CD4-positive, alpha-beta T cell (primary cell): ENCODE measurements at regions of chr6 and their contacts with region 1.

Region 1: GRCh38 chr6:31729515-31729978 is 448 bp upstream of the DDAH2 start:
- DNase-seq: peak; percentile 69 to 90 (median 77)
- ATAC-seq: peak; percentile 76
- H3K4me3 ChIP-seq: peak overlapping the region; percentile 77
- H3K4me3 Mint-ChIP-seq: peak overlapping the region; percentile 98
- H3K27ac ChIP-seq: peak overlapping the region; percentile 45 to 68
- H3K27ac Mint-ChIP-seq: peak overlapping the region; percentile 61
- H3K4me1 ChIP-seq: peaks cover 66% of the 10 kb centered on the region
- H3K4me1 Mint-ChIP-seq: peaks cover 67% of the 10 kb centered on the region
- H3K27me3 ChIP-seq: no peaks in the 10 kb centered on the region
- H3K27me3 Mint-ChIP-seq: no peaks in the 10 kb centered on the region
- CTCF ChIP-seq: peak; percentile 89

Region 2: DNA sequence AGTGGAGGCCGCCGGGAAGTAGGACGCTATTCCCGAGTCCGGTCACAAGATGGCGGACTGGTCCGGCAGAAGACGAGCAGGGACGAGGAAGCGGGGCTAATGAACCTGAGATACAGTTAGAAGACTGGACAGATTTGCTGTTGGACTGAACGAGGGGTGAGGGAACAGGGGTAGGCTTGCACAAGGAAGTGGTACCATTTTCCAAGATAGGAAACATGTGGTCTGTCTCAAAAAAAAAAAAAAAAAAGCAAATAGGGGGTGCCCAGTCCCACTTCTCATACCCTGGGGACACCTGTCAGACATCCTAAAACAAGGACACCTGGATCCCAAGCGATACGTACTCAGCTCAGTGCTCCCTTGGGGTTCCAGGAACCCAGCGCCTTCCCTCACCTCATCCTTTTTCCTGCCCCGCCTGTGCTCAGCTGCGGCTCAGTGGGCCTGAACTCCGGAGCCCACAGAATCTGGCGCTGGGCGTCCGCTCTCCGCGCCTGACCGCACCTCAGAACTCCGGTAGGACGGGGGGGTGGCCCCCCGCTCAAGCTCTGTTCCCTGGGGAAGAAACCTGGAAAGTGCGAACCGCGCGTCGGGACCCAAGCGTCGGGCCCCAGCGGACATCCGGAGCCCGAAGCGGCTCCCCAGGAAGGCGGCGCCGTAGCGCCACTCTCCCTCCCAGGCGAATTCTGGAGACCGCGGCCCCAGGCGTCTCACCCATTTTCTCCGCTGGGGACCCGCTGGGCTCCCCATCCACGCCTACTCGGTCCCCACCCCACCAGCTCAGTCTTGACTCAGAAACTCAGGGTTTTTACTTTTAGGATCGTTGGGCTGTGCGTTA is 48.5 kb before region 1 on chr6 and contains the start of gene LY6G5C:
- CTCF ChIA-PET with region 1: no interaction called
- POLR2A ChIA-PET with region 1: no interaction called
- intact Hi-C with region 1: loop called in 1 of 2 experiments (anchors 2 kb)
- DNase-seq: peak in 13 of 14 experiments; percentile 45 to 83 (median 61)
- ATAC-seq: peak; percentile 71
- H3K4me3 ChIP-seq: peak within 1 kb of the TSS; percentile 79
- H3K4me3 Mint-ChIP-seq: peak within 1 kb of the TSS; percentile 87
- H3K27ac ChIP-seq: peak within 1 kb of the TSS in 1 of 2 donors; percentile 44
- H3K27ac Mint-ChIP-seq: peak within 1 kb of the TSS; percentile 35
- H3K4me1 ChIP-seq: peaks cover 21% of the 10 kb centered on the region
- H3K4me1 Mint-ChIP-seq: peaks cover 19% of the 10 kb centered on the region
- H3K27me3 ChIP-seq: no peaks in the 10 kb centered on the region
- H3K27me3 Mint-ChIP-seq: no peaks in the 10 kb centered on the region
- CTCF ChIP-seq: peak; percentile 71
- total RNA-seq, gene LY6G5C: 0.49 to 0.67 TPM

Region 3: GRCh38 chr6:31739639-31740396 is 10.3 kb after region 1 on chr6 and contains the start of gene MSH5:
- CTCF ChIA-PET with region 1: interaction called, 41 read pairs
- POLR2A ChIA-PET with region 1: interaction called, 21 read pairs
- intact Hi-C with region 1: loop called in 1 of 2 experiments (anchors 1 kb)
- DNase-seq: peak; percentile 85 to 98 (median 93)
- ATAC-seq: peak; percentile 85
- H3K4me3 ChIP-seq: peak within 1 kb of the TSS; percentile 87
- H3K4me3 Mint-ChIP-seq: peak within 1 kb of the TSS; percentile 90
- H3K27ac ChIP-seq: peak within 1 kb of the TSS; percentile 38 to 58
- H3K27ac Mint-ChIP-seq: peak within 1 kb of the TSS; percentile 85
- H3K4me1 ChIP-seq: peaks cover 53% of the 10 kb centered on the region
- H3K4me1 Mint-ChIP-seq: peaks cover 61% of the 10 kb centered on the region
- H3K27me3 ChIP-seq: no peaks in the 10 kb centered on the region
- H3K27me3 Mint-ChIP-seq: no peaks in the 10 kb centered on the region
- CTCF ChIP-seq: no peak
- total RNA-seq, gene MSH5: 13.6 to 13.7 TPM

Region 4: GRCh38 chr6:31795616-31796298 is 66.2 kb after region 1 on chr6 and contains the start of gene VARS1:
- CTCF ChIA-PET with region 1: interaction called, 9 read pairs
- POLR2A ChIA-PET with region 1: interaction called, 7 read pairs
- intact Hi-C with region 1: loop called in 1 of 2 experiments (anchors 2 kb)
- DNase-seq: peak; percentile 69 to 94 (median 80)
- ATAC-seq: peak; percentile 79
- H3K4me3 ChIP-seq: peak within 1 kb of the TSS; percentile 77
- H3K4me3 Mint-ChIP-seq: peak within 1 kb of the TSS; percentile 97
- H3K27ac ChIP-seq: peak within 1 kb of the TSS; percentile 81 to 90
- H3K27ac Mint-ChIP-seq: peak within 1 kb of the TSS; percentile 54
- H3K4me1 ChIP-seq: peaks cover 49% of the 10 kb centered on the region
- H3K4me1 Mint-ChIP-seq: peaks cover 38% of the 10 kb centered on the region
- H3K27me3 ChIP-seq: no peaks in the 10 kb centered on the region
- H3K27me3 Mint-ChIP-seq: no peaks in the 10 kb centered on the region
- CTCF ChIP-seq: peak; percentile 76
- total RNA-seq, gene VARS1: 43.9 to 44.2 TPM

Region 5: DNA sequence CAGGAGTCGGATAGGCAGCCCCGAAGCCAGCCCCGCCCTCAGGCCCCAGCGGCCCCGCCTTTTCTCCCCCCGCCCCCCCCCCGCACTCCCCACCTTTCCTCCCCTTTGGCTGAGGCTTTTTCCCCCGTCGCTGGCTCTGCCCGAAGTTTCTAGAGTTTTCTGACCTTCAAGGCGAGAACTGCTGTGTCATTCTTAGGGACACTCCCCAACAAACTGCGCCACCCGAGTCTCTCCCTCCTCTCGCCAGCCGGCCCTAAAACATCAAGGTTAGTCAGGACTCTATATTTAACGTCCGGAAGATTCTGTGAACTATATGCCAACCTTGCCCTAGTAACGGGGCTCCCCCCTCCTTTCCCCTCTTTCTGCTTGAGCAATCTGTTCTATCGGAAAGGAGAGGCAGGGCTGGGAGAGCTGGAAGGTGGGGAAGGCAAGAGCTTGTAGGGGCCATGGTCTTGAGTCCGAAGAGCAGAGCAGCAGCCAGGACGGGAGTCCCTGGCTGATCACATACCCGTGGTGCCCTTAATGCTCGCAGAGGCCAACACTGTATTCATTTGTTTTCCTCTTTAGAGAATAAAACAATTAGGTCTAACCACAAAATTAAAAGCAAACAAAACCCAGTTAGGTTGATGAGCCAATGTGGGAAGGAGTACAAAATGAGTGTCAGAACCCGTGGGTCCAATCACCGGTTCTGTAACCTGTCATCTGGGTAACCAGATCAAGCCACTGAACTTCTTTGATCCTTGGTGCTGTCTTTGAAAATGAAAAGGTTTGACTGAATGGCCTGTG is 92.7 kb after region 1 on chr6:
- CTCF ChIA-PET with region 1: interaction called, 7 read pairs
- POLR2A ChIA-PET with region 1: interaction called, 12 read pairs
- intact Hi-C with region 1: loop called in 1 of 2 experiments (anchors 2 kb)
- DNase-seq: peak in 13 of 14 experiments; percentile 30 to 85 (median 55)
- ATAC-seq: peak; percentile 60
- H3K4me3 ChIP-seq: peak overlapping the region; percentile 63
- H3K4me3 Mint-ChIP-seq: peak overlapping the region; percentile 94
- H3K27ac ChIP-seq: peak overlapping the region; percentile 83 to 84
- H3K27ac Mint-ChIP-seq: peak overlapping the region; percentile 94
- H3K4me1 ChIP-seq: peaks cover 58% of the 10 kb centered on the region
- H3K4me1 Mint-ChIP-seq: peaks cover 62% of the 10 kb centered on the region
- H3K27me3 ChIP-seq: no peaks in the 10 kb centered on the region
- H3K27me3 Mint-ChIP-seq: no peaks in the 10 kb centered on the region
- CTCF ChIP-seq: no peak

Region 6: DNA sequence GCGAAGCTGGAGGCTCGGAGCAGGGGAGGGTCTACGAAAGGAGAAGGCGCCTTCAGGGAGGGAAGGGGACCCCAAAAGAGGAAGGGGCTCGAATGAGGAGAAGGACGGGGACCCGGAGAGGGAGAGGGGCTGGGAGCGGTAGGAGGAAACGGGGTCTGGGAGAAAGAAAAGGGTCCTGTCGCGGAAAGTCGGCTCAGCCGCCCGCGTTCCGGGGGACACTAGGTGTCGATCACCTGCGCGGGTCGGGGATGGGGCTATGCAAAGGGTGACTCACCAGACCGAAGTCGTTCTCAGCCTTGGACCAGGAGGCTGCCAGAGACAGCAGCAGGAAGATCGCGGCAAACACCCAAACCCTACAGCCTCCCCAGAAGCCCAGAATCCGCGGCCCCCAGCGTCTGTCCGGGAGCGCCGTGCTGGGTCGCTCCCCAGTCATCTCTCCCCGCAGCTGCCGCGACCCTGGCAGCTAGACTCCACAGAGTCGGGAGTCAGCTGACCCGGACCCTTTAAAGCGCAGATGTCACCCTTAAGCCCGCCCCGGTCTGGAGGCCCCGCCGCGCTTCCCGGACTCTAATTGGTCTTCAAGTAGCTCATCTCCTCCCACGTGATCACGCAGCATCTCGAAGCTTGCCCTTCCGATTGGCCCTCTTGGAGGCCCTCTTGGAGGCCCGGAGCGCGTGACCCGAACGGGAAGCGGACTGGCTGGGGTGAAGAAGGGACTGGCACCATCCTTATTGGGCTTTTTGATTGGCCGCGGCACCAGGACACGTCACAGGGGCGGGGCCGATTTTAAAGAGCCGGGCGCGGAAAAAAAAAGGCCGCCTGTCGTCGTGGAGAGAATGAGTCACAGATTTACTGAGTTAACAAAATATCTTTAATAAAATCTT is 133.0 kb after region 1 on chr6 and contains the start of gene NEU1:
- CTCF ChIA-PET with region 1: interaction called, 4 read pairs
- POLR2A ChIA-PET with region 1: no interaction called
- intact Hi-C with region 1: loop called in 1 of 2 experiments (anchors 1 kb)
- DNase-seq: peak; percentile 95 to 100 (median 98)
- ATAC-seq: peak; percentile 93
- H3K4me3 ChIP-seq: peak within 1 kb of the TSS; percentile 99
- H3K4me3 Mint-ChIP-seq: peak within 1 kb of the TSS; percentile 88
- H3K27ac ChIP-seq: peak within 1 kb of the TSS; percentile 80 to 96
- H3K27ac Mint-ChIP-seq: peak within 1 kb of the TSS; percentile 91
- H3K4me1 ChIP-seq: peaks cover 37% of the 10 kb centered on the region
- H3K4me1 Mint-ChIP-seq: peaks cover 28% of the 10 kb centered on the region
- H3K27me3 ChIP-seq: no peaks in the 10 kb centered on the region
- H3K27me3 Mint-ChIP-seq: no peaks in the 10 kb centered on the region
- CTCF ChIP-seq: no peak
- total RNA-seq, gene NEU1: 19.7 to 21.1 TPM